Colonic mucosa (tissue), 4 donors: ENCODE measurements at regions of chr3 and their contacts with region 1.

Region 1: GRCh38 chr3:40317061-40317855 is 7.8 kb downstream of the EIF1B start:
- DNase-seq: peak; percentile 53
- H3K4me3 ChIP-seq: no peak overlapping the region
- H3K27ac ChIP-seq: no peak overlapping the region
- H3K4me1 ChIP-seq: peaks cover 4% of the 10 kb centered on the region
- H3K27me3 ChIP-seq: no peaks in the 10 kb centered on the region
- CTCF ChIP-seq: peak; percentile 76

Region 2: DNA sequence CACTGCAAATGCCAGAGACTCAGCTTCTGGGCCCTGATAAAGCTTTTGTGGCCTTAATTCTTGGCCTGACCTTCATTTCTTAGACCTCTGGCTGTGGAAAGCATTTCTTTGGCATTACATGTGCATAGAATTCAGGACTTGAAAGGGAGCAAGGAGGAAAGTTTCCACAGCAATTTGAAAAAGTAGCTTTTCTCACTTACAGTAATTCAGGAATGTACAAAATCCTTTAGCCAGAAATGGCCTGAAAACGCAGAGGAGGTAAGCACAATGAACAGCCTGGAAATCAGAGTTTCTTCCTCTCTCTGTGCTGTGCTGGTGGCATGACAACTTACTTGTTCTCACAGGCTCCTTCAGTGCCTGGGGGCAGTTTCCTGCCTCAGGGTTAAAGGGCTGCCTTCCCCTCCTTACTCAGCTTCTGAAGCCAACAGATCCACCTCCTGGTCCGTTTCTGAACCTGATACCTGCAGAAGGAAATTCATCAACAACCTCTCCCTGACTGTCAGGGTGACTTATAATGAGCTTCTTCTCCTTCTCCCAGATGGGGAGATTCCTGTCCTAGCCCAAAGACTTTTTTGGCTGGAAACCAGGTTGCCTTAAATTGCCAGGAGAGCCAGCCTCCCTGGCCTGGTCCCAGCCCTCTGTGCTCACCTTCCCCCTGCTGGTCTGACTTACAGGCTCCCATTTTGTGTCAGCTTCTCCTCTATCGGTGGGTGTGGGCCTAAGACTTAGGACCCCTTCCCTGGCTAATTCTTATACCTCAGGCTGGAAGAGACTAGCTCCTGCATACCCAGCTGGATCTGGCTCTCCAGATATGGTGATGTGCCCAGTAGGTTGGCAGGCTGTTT is 405.6 kb before region 1 on chr3:
- intact Hi-C with region 1: no loop called
- DNase-seq: no peak
- H3K4me3 ChIP-seq: no peak overlapping the region
- H3K27ac ChIP-seq: peak overlapping the region; percentile 16
- H3K4me1 ChIP-seq: peaks cover 8% of the 10 kb centered on the region
- H3K27me3 ChIP-seq: no peaks in the 10 kb centered on the region
- CTCF ChIP-seq: no peak

Region 3: DNA sequence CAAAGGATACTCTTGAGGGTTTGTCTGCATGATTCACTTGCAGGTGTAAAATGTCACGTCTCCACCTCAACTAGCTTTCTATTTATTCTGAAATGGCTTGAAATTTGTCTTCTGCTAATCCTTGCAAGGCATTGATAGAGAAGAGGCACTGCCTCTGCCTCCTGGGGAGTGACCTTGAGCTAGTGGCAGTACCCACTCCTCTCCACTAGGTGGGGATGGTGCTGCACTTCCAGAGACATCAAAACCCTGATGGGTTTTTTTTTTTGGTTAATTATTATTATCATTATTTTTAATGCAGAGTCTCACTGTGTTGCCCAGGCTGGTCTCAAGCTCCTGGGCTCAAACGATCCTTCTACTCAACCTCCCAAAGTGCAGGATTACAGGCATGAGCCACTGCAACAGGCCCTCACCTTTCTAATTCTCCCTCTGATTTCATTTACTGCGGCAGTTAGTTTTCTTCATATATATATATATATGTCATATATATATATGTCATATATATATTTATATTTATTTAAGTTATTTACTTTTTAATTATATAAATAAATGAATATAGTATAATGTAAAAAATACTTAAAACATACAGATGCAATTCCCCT is 125.3 kb before region 1 on chr3:
- intact Hi-C with region 1: loop called (anchors 2 kb)
- DNase-seq: peak; percentile 54
- H3K4me3 ChIP-seq: no peak overlapping the region
- H3K27ac ChIP-seq: no peak overlapping the region
- H3K4me1 ChIP-seq: no peaks in the 10 kb centered on the region
- H3K27me3 ChIP-seq: no peaks in the 10 kb centered on the region
- CTCF ChIP-seq: peak; percentile 95

Region 4: DNA sequence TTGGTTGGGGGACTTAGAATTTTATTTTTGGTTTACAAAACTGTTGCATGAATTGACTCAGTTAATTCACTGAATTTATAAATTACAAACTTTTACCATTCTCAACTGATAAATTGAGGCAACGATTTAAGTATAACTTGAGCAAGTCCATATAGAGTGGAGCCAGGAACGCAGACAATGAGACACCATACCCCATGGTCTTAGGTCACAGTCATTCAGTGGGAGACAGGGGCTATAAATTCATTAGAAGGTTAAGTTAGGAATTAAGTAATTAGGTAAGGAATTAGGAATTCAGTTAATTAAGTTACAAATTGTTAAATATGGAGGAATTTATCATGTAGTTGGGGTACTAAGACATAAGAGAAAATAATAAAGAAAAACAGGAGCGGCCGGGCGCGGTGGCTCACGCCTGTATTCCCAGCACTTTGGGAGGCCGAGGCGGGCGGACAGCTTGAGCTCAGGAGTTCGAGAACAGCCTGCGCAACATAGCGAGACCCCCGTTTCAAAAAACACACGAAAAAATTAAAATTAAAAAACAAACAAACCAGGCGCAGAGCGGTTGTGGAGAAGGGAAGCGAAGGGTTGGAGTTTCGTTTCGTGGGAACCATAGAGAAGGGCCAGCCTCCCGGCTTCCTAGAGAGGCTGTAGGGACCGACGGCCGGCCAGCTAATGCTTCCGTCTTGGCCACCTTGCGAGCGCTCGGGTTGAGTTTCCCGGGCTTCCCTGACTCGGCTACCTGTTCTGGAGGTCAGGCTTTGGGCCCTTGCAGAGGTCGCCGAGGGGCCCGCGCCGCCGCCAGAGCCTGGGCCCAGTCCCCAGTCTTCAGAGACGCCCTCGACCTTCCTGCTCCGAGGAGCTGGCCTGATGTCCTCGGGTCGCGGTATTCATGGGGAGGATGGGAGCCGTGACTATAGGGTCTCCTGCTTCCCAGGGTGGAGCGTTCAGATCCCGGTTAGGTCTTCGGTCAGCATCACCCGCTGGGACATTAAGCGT is 159.5 kb after region 1 on chr3 and contains the start of gene ZNF619:
- intact Hi-C with region 1: no loop called
- DNase-seq: peak; percentile 82
- H3K4me3 ChIP-seq: peak within 1 kb of the TSS; percentile 66
- H3K27ac ChIP-seq: peak within 1 kb of the TSS; percentile 39
- H3K4me1 ChIP-seq: no peaks in the 10 kb centered on the region
- H3K27me3 ChIP-seq: no peaks in the 10 kb centered on the region
- CTCF ChIP-seq: no peak
- total RNA-seq, gene ZNF619: 6.2 to 7.7 TPM

Region 5: GRCh38 chr3:41881233-41881821 is 1564.1 kb after region 1 on chr3:
- intact Hi-C with region 1: loop called (anchors 10 kb)
- DNase-seq: no peak
- H3K4me3 ChIP-seq: no peak overlapping the region
- H3K27ac ChIP-seq: no peak overlapping the region
- H3K4me1 ChIP-seq: no peaks in the 10 kb centered on the region
- H3K27me3 ChIP-seq: no peaks in the 10 kb centered on the region
- CTCF ChIP-seq: peak; percentile 71